ENCODE measurements at regions of chr20 and their contacts with region 1.

Region 1: GRCh38 chr20:2671977-2672376 is 8.0 kb upstream of the IDH3B start:
- DNase-seq: no peak
- H3K4me3 ChIP-seq: no peak overlapping the region
- H3K27me3 ChIP-seq: peaks cover 4% of the 10 kb centered on the region; the same call in 1 of the 2 replicates
- CTCF ChIP-seq: peak; percentile 12; the same call in 1 of the 2 replicates

Region 2: GRCh38 chr20:2446845-2447244 is 225.1 kb before region 1 on chr20:
- CTCF ChIA-PET with region 1: no interaction called
- POLR2A ChIA-PET with region 1: no interaction called
- DNase-seq: no peak
- H3K4me3 ChIP-seq: no peak overlapping the region
- H3K27me3 ChIP-seq: no peaks in the 10 kb centered on the region
- CTCF ChIP-seq: no peak

Region 3: GRCh38 chr20:2658414-2659354 is 13.3 kb before region 1 on chr20:
- CTCF ChIA-PET with region 1: no interaction called
- POLR2A ChIA-PET with region 1: no interaction called
- DNase-seq: no peak
- H3K4me3 ChIP-seq: no peak overlapping the region
- H3K27me3 ChIP-seq: no peaks in the 10 kb centered on the region
- CTCF ChIP-seq: no peak

Region 4: GRCh38 chr20:2688041-2688591 is 16.1 kb after region 1 on chr20:
- CTCF ChIA-PET with region 1: interaction called, 11 read pairs
- POLR2A ChIA-PET with region 1: no interaction called
- DNase-seq: no peak
- H3K4me3 ChIP-seq: no peak overlapping the region
- H3K27me3 ChIP-seq: peaks cover 18% of the 10 kb centered on the region
- CTCF ChIP-seq: peak; percentile 52